Activated CD4-positive, alpha-beta T cell treated with anti-CD3 and anti-CD28 coated beads, Interleukin-2, amount 10 ng/mL, durations not matched to agents 24 days and 14 days (primary cell): ENCODE measurements at regions of chr15 and their contacts with region 1.

Region 1: GRCh38 chr15:65787260-65787659 is 4.8 kb downstream of the DENND4A start:
- DNase-seq: no peak
- H3K4me3 Mint-ChIP-seq: peak overlapping the region; percentile 34
- H3K27ac Mint-ChIP-seq: peak overlapping the region; percentile 70
- H3K4me1 Mint-ChIP-seq: peaks cover 38% of the 10 kb centered on the region
- H3K27me3 Mint-ChIP-seq: no peaks in the 10 kb centered on the region

Region 2: GRCh38 chr15:65712415-65712814 is 74.8 kb before region 1 on chr15:
- intact Hi-C with region 1: no loop called
- DNase-seq: no peak
- H3K4me3 Mint-ChIP-seq: no peak overlapping the region
- H3K27ac Mint-ChIP-seq: no peak overlapping the region
- H3K4me1 Mint-ChIP-seq: peaks cover 2% of the 10 kb centered on the region
- H3K27me3 Mint-ChIP-seq: no peaks in the 10 kb centered on the region

Region 3: GRCh38 chr15:65738649-65739048 is 48.6 kb before region 1 on chr15:
- intact Hi-C with region 1: no loop called
- DNase-seq: no peak
- H3K4me3 Mint-ChIP-seq: no peak overlapping the region
- H3K27ac Mint-ChIP-seq: no peak overlapping the region
- H3K4me1 Mint-ChIP-seq: no peaks in the 10 kb centered on the region
- H3K27me3 Mint-ChIP-seq: no peaks in the 10 kb centered on the region

Region 4: DNA sequence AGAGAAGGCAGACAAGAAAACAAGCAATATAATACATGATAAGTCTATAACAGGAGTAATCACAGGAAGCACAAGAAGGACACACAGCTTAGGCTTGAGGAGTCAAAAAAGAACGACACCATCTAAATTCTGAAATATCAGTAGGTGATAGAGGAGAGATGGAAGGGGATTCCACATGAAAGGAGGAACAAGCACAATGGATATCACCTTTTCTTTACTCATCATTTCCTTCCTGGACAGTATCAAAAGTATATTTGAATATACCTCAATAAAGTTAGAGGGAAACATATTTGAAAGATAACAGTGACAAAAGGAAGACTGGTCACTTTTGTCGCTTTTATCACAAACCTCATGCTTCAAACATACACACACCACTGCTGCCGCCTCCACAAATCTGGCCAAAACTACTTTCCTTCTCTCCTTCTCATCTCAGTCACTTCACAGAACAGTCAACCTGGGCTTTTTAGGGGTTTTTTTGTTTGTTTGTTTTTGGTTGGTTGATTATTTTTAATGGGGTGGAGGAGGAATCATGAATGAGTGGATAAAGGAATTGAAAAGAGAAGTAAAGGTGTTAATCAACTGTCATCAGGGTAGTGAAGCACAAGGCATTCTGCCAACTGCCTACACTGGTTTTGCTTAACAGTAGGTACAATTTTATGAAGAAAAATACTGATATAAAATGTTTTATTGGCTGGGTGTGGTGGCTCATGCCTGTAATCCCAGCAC is 13.7 kb before region 1 on chr15:
- intact Hi-C with region 1: loop called (anchors 2 kb)
- DNase-seq: no peak
- H3K4me3 Mint-ChIP-seq: no peak overlapping the region
- H3K27ac Mint-ChIP-seq: peak overlapping the region; percentile 63
- H3K4me1 Mint-ChIP-seq: peaks cover 25% of the 10 kb centered on the region
- H3K27me3 Mint-ChIP-seq: no peaks in the 10 kb centered on the region